ENCODE measurements at regions of chr9 and their contacts with region 1.

Region 1: DNA sequence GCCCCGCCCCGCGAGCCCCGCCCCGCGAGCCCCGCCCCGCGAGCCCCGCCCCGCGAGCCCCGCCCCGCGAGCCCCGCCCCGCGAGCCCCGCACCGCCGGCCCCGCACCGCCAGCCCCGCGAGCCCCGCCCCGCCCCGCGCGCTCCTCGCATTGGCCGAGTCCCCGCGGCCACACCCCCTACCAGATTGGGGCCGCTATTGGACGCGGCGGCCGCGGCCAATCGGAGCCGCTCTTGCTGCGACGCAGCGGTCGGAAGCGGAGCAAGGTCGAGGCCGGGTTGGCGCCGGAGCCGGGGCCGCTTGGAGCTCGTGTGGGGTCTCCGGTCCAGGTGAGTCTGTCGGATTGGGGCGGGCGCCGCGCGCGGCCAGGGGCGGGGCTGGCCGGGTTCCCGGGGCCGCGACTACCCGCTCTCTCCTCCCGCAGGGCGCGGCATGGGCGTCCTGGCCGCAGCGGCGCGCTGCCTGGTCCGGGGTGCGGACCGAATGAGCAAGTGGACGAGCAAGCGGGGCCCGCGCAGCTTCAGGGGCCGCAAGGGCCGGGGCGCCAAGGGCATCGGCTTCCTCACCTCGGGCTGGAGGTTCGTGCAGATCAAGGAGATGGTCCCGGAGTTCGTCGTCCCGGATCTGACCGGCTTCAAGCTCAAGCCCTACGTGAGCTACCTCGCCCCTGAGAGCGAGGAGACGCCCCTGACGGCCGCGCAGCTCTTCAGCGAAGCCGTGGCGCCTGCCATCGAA is at the start of gene MRPL41:
- DNase-seq: peak; percentile 95 to 96
- ATAC-seq: peak; percentile 89
- H3K4me3 ChIP-seq: peak within 1 kb of the TSS; percentile 59 to 79
- H3K27ac ChIP-seq: peak within 1 kb of the TSS; percentile 6 to 35
- H3K4me1 ChIP-seq: no peaks in the 10 kb centered on the region
- H3K27me3 ChIP-seq: no peaks in the 10 kb centered on the region
- total RNA-seq, gene MRPL41: 25.8 to 43.7 TPM

Region 2: GRCh38 chr9:137605121-137606004 is 53.5 kb after region 1 on chr9 and contains the start of gene ARRDC1:
- intact Hi-C with region 1: loop called in 1 of 2 experiments (anchors 10 kb)
- DNase-seq: peak; percentile 97 to 98
- ATAC-seq: peak; percentile 93
- H3K4me3 ChIP-seq: peak within 1 kb of the TSS; percentile 56 to 83
- H3K27ac ChIP-seq: peak within 1 kb of the TSS in 1 of 2 donors; percentile 53
- H3K4me1 ChIP-seq: no peaks in the 10 kb centered on the region
- H3K27me3 ChIP-seq: no peaks in the 10 kb centered on the region
- total RNA-seq, gene ARRDC1: 20.6 to 35.6 TPM

Measured in aorta (tissue), 5 donors.